Activated CD8-positive, alpha-beta T cell treated with anti-CD3 and anti-CD28 coated beads, Interleukin-2, amount 10 ng/mL, durations not matched to agents 7 days and 5 days (primary cell): ENCODE measurements at regions of chr21 and their contacts with region 1.

Region 1: DNA sequence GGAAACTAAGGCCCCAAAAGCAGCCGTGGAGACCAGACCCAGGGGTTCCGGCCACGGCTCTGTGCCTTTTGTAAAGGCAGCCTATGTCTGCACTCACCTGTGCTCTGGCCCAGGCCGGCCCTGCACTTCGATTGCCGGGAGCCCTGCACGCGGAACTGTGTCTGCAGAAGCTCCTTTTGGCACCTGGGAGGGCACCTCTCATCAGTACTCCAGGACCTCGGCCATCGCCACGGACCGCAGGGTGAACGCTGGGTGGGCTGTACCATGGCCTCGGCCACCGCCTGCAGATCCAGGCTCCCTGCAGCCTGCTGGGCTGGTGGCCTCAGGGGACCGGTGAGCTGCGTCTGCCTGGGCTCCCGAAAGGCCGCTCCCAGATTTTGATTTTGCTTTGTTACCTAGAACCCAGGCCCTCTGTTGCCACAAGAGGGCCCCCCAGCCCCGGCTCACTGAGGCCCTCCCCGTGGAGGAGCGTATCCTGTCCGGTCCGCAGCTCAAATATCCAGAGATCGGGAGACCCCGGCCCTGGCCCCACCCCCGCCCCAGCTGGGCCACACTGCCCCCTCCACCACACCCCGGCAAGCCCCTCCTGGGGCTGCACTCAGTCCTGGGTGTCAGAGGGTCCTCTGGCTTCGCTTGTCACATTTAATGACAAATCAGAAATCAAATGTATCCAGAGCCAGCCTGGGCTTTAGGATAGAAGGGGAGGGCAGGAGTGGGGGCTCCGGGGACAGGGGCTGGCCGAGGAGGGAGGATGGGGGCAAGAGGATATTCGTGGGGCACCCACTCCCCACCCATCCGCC is 60.2 kb upstream of the PDE9A start:
- DNase-seq: peak; percentile 79
- ATAC-seq: peak; percentile 93
- H3K4me3 Mint-ChIP-seq: no peak overlapping the region
- H3K27ac Mint-ChIP-seq: no peak overlapping the region
- H3K4me1 Mint-ChIP-seq: peaks cover 18% of the 10 kb centered on the region
- H3K27me3 Mint-ChIP-seq: peaks cover 4% of the 10 kb centered on the region

Region 2: DNA sequence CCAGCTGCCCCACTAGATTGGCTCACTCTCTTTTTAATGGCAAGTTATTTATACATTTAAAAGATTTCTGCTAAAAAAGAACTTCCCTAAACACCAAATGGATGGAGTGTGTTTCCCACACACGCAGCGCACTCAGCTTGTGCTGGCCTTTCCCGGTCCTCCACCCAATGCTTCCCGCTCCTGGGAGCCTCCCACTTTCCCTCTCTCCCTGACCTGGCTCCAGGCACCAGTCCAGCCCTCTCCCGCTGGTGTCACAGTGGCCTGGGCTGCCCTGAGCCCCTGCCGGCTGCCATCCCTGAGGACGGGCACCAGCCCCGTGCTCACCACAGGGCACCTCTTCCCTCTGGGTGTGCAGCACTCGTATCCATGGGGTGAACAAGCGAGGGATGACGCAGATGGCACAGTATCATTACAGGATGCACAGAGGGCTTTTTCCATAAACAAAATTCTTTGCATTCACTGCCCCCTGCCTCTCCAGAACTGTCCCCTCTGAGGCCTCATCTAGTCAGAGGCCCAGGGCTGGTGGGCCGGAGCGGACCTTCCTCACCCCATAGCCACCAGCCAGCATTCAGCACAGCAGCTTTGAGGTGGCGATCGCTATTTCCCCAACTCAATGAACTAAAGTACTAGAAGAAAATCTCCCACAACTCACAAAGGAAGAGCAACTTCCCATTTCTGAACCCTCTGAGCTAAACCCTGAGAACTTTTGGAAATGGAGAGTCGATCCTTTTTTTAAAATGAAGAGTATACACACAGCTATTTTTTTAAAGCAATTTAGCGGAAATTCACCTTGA is 11.0 kb before region 1 on chr21:
- CTCF ChIA-PET with region 1: interaction called, 11 read pairs
- POLR2A ChIA-PET with region 1: no interaction called
- DNase-seq: no peak
- ATAC-seq: no peak
- H3K4me3 Mint-ChIP-seq: no peak overlapping the region
- H3K27ac Mint-ChIP-seq: no peak overlapping the region
- H3K4me1 Mint-ChIP-seq: peaks cover 5% of the 10 kb centered on the region
- H3K27me3 Mint-ChIP-seq: no peaks in the 10 kb centered on the region

Region 3: GRCh38 chr21:42737951-42738590 is 144.9 kb after region 1 on chr21:
- CTCF ChIA-PET with region 1: interaction called, 11 read pairs
- POLR2A ChIA-PET with region 1: no interaction called
- DNase-seq: peak; percentile 55
- ATAC-seq: peak; percentile 82
- H3K4me3 Mint-ChIP-seq: peak overlapping the region; percentile 57
- H3K27ac Mint-ChIP-seq: peak overlapping the region; percentile 98
- H3K4me1 Mint-ChIP-seq: peaks cover 59% of the 10 kb centered on the region
- H3K27me3 Mint-ChIP-seq: no peaks in the 10 kb centered on the region

Region 4: GRCh38 chr21:42818328-42818749 is 225.1 kb after region 1 on chr21:
- CTCF ChIA-PET with region 1: interaction called, 34 read pairs
- POLR2A ChIA-PET with region 1: no interaction called
- DNase-seq: peak; percentile 69
- ATAC-seq: peak; percentile 70
- H3K4me3 Mint-ChIP-seq: no peak overlapping the region
- H3K27ac Mint-ChIP-seq: no peak overlapping the region
- H3K4me1 Mint-ChIP-seq: no peaks in the 10 kb centered on the region
- H3K27me3 Mint-ChIP-seq: no peaks in the 10 kb centered on the region

Region 5: DNA sequence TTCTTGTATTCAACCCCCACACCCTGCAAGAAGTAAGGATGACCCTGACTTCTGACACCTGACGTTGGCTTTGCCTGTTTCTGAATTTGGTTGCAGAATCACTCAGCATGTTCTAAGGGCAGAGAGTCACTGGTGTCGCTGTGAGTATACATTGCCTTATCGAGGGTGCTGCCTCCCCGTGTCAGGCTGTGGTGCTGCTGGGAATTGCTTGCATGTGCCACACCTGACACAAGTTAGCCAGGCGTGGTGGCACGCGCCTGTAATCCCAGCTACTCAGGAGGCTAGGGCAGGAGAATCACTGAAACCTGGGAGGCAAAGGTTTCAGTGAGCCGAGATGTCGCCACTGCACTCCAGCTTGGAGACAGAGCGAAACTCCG is 240.2 kb after region 1 on chr21:
- CTCF ChIA-PET with region 1: interaction called, 17 read pairs
- POLR2A ChIA-PET with region 1: no interaction called
- DNase-seq: peak; percentile 74
- ATAC-seq: peak; percentile 78
- H3K4me3 Mint-ChIP-seq: peak overlapping the region; percentile 5
- H3K27ac Mint-ChIP-seq: peak overlapping the region; percentile 63
- H3K4me1 Mint-ChIP-seq: peaks cover 31% of the 10 kb centered on the region
- H3K27me3 Mint-ChIP-seq: peaks cover 16% of the 10 kb centered on the region